Common myeloid progenitor, CD34-positive (primary cell): ENCODE measurements at regions of chr15 and their contacts with region 1.

Region 1: GRCh38 chr15:73908030-73908821 is 18.0 kb upstream of the LOXL1 start:
- DNase-seq: peak; percentile 70 to 83 (median 80)
- H3K4me3 ChIP-seq: no peak overlapping the region
- H3K27ac ChIP-seq: no peak overlapping the region
- H3K4me1 ChIP-seq: peaks cover 6 to 35% (median 26%) of the 10 kb centered on the region in 4 experiments
- H3K27me3 ChIP-seq: no peaks in the 10 kb centered on the region

Region 2: DNA sequence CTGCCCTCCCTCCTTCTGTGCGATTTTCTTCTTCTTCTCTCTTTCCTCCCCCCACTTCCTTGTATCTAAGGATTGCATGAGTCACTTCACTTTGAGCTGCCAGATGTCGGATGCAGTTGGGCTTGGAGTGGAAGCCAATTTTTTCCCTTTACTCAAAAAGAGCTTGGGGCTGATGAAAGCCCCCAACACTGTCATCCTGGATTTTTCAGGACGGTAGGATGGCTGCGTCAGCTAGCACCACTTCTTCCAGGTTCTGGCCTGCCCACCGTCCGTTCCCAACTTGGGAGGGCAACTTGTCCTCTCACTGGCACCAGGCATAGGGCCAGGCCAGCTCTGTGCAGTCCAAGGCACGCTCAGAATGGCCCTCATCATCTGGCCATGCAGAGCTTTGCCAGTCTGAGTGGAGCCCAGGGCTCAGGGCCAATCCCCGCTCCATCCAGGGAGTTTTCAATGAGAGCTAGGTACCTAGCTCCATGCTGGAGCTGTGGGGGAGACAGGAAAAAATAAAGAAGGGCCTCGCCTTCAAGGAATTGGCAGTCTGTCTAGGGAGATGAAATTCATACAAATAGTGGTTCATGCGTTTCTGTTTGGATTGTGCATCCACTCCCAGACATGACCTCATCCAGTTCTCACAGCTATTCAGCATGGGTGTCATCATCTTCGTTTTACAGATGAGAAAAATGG is 107.4 kb before region 1 on chr15:
- CTCF ChIA-PET with region 1: no interaction called
- POLR2A ChIA-PET with region 1: no interaction called
- DNase-seq: peak; percentile 7 to 61 (median 44)
- H3K4me3 ChIP-seq: no peak overlapping the region
- H3K27ac ChIP-seq: no peak overlapping the region
- H3K4me1 ChIP-seq: peaks cover 0 to 20% (median 14%) of the 10 kb centered on the region in 4 experiments
- H3K27me3 ChIP-seq: no peaks in the 10 kb centered on the region

Region 3: GRCh38 chr15:73873889-73874511 is 34.2 kb before region 1 on chr15:
- CTCF ChIA-PET with region 1: interaction called, 73 read pairs
- POLR2A ChIA-PET with region 1: no interaction called
- DNase-seq: peak; percentile 70 to 81 (median 74)
- H3K4me3 ChIP-seq: no peak overlapping the region
- H3K27ac ChIP-seq: no peak overlapping the region
- H3K4me1 ChIP-seq: peaks cover 0 to 13% (median 10%) of the 10 kb centered on the region in 4 experiments
- H3K27me3 ChIP-seq: peaks cover 0 to 10% (median 4%) of the 10 kb centered on the region in 5 experiments

Region 4: DNA sequence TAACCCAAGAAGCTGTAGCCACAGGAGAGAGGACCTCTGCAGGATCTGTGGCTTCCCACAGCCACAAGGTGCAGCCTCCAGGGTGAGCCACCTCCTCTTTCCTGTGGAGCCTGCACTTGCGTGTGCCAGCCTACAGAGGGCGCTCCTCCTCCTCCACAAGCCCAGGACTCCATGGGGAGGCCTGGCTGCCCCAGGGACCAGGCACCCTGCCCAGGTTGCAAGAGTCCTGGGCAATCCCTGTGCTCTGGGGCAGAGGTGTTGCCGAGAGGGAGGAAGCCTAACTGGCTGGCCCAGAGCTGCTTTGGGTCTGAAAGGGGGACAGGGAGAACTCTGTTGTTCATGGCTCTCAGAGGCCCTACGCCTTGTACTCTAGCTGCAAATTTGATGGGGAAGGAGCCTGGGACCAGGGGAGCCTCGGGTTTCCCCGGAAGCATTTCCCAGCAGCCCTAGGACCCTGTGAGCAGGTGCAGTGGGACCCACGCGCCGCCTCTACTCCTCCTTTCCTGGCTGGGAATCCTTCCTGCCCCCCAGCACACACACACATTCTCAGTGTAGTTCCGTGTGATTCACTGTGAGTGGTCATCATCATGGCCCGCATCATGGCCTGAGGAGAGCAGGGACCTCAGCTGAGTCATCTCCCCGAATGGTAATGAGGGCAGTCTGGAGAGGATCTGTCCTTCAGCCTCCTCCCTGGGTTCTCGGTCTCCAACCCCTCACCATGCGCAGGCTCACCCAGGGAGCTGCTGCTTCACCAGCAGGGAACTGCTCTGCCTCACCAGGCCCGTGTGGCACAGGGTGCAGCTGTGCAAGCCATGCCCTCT is 10.6 kb before region 1 on chr15:
- CTCF ChIA-PET with region 1: interaction called, 17 read pairs
- POLR2A ChIA-PET with region 1: no interaction called
- DNase-seq: peak; percentile 36 to 56 (median 51)
- H3K4me3 ChIP-seq: no peak overlapping the region
- H3K27ac ChIP-seq: no peak overlapping the region
- H3K4me1 ChIP-seq: no peaks in the 10 kb centered on the region
- H3K27me3 ChIP-seq: no peaks in the 10 kb centered on the region

Region 5: GRCh38 chr15:73922186-73923151 is 14.2 kb after region 1 on chr15:
- CTCF ChIA-PET with region 1: interaction called, 34 read pairs
- POLR2A ChIA-PET with region 1: interaction called, 6 read pairs
- DNase-seq: no peak
- H3K4me3 ChIP-seq: peak overlapping the region in 4 of 7 experiments; percentile 11 to 51 (median 20)
- H3K27ac ChIP-seq: no peak overlapping the region
- H3K4me1 ChIP-seq: peaks cover 3 to 77% (median 73%) of the 10 kb centered on the region in 4 experiments
- H3K27me3 ChIP-seq: no peaks in the 10 kb centered on the region

Region 6: GRCh38 chr15:73927476-73928240 is 19.4 kb after region 1 on chr15:
- CTCF ChIA-PET with region 1: interaction called, 50 read pairs
- POLR2A ChIA-PET with region 1: interaction called, 6 read pairs
- DNase-seq: peak; percentile 63 to 87 (median 83)
- H3K4me3 ChIP-seq: peak overlapping the region; percentile 28 to 76 (median 68)
- H3K27ac ChIP-seq: no peak overlapping the region
- H3K4me1 ChIP-seq: peaks cover 2 to 72% (median 57%) of the 10 kb centered on the region in 4 experiments
- H3K27me3 ChIP-seq: no peaks in the 10 kb centered on the region

Region 7: GRCh38 chr15:73936181-73936580 is 28.0 kb after region 1 on chr15:
- CTCF ChIA-PET with region 1: interaction called, 50 read pairs
- POLR2A ChIA-PET with region 1: no interaction called
- DNase-seq: peak in 1 of 3 donors; percentile 8
- H3K4me3 ChIP-seq: no peak overlapping the region
- H3K27ac ChIP-seq: no peak overlapping the region
- H3K4me1 ChIP-seq: peaks cover 0 to 60% (median 40%) of the 10 kb centered on the region in 4 experiments
- H3K27me3 ChIP-seq: no peaks in the 10 kb centered on the region

Region 8: DNA sequence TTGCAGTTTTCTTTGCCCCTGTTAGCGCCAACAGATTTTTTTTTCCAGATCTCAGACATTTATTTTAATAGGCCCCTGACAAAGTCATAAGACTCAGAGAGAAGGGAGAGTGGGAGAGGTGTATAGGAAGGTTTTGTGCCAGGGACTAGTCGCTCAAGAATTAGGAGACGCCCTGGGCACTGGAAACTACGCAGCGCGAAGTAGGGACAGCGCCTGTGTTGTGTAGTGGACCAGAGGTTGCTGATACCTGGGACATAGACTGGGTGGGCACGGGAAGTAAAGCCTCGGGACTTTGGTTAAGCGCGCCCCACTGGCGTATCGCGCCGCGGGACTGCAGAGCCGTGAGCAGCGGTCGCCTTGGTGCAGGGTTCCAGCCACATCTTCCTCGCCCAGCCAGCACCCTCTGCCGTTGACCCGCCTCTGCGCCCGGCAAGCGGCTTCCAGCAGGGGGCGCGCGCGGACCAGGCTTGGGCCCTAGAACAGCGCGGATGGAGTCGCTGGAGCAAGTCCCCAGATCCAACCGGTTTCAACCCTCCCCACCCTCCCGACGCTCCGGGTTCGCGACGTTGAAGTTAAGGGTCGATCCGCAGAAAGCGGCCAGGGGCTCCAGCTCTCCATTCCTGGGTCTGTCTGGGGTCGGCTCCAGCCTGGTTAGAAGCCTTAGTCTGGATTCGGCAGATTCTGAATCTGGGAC is 219.2 kb after region 1 on chr15:
- CTCF ChIA-PET with region 1: no interaction called
- POLR2A ChIA-PET with region 1: no interaction called
- DNase-seq: peak; percentile 82 to 87 (median 87)
- H3K4me3 ChIP-seq: peak overlapping the region in 3 of 7 experiments; percentile 32 to 59 (median 52)
- H3K27ac ChIP-seq: no peak overlapping the region
- H3K4me1 ChIP-seq: peaks cover 6 to 44% (median 35%) of the 10 kb centered on the region in 4 experiments
- H3K27me3 ChIP-seq: peaks cover 0 to 68% (median 35%) of the 10 kb centered on the region in 5 experiments